ENCODE measurements at regions of chr2 and their contacts with region 1.

Region 1: GRCh38 chr2:86623651-86624541 is at the start of gene RNF103:
- DNase-seq: peak; percentile 91
- H3K4me3 Mint-ChIP-seq: peak within 1 kb of the TSS; percentile 93
- H3K27ac Mint-ChIP-seq: peak within 1 kb of the TSS; percentile 94
- H3K4me1 Mint-ChIP-seq: peaks cover 21% of the 10 kb centered on the region
- H3K27me3 Mint-ChIP-seq: peaks cover 17% of the 10 kb centered on the region
- total RNA-seq, gene RNF103: 12.4 and 12.7 TPM in 2 replicates

Region 2: GRCh38 chr2:86195055-86195807 is 428.7 kb before region 1 on chr2 and contains the start of gene IMMT:
- intact Hi-C with region 1: loop called (anchors 5 kb)
- DNase-seq: peak; percentile 91
- H3K4me3 Mint-ChIP-seq: peak within 1 kb of the TSS; percentile 96
- H3K27ac Mint-ChIP-seq: peak within 1 kb of the TSS; percentile 89
- H3K4me1 Mint-ChIP-seq: peaks cover 43% of the 10 kb centered on the region
- H3K27me3 Mint-ChIP-seq: no peaks in the 10 kb centered on the region
- total RNA-seq, gene IMMT: 160 and 180 TPM in 2 replicates

Region 3: DNA sequence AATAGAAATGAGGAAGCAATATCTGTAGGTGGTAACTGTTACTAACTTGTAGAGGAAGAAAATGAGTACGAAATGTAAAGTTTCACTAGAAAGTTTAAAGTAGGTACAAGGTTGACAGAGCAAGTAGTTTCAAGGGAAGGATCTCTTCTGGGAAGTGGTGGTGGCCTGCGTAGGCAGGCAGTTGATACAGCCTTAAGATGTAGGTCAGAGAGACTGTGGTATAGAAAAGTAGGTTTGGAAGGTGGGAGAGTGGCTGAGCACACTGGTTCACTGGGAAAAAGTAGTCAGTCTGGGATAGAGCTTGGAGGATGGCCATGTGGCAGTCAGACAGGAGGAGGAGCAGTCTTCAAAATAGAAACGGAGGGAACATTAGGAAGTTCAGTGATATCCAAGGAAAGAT is 159.2 kb before region 1 on chr2:
- intact Hi-C with region 1: loop called (anchors 5 kb)
- DNase-seq: no peak
- H3K4me3 Mint-ChIP-seq: peak overlapping the region; percentile 33
- H3K27ac Mint-ChIP-seq: peak overlapping the region; percentile 75
- H3K4me1 Mint-ChIP-seq: peaks cover 52% of the 10 kb centered on the region
- H3K27me3 Mint-ChIP-seq: no peaks in the 10 kb centered on the region

Region 4: DNA sequence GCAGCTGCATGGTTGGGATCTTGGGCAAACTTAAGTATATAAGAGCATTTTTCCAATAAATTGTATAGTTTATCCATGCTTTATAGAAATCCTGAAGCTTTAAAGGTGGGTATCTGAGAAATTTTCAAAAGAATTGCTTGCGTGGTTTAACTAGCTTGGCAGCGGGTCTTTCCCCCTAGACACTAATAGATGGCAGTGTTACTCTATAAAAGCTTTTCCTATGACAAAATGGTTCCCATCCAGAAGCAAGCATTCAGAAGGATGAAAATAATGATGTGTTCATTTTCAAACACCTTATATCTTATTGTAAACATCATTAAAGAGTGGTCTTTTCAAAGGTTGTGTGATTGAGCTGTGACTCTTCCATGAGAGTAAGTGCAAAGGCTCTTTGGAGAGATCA is 136.8 kb before region 1 on chr2:
- intact Hi-C with region 1: loop called (anchors 5 kb)
- DNase-seq: no peak
- H3K4me3 Mint-ChIP-seq: no peak overlapping the region
- H3K27ac Mint-ChIP-seq: no peak overlapping the region
- H3K4me1 Mint-ChIP-seq: peaks cover 29% of the 10 kb centered on the region
- H3K27me3 Mint-ChIP-seq: no peaks in the 10 kb centered on the region

Region 5: GRCh38 chr2:86562922-86563649 is 60.8 kb before region 1 on chr2 and contains the start of gene CHMP3:
- intact Hi-C with region 1: loop called (anchors 2 kb)
- DNase-seq: peak; percentile 96
- H3K4me3 Mint-ChIP-seq: peak within 1 kb of the TSS; percentile 90
- H3K27ac Mint-ChIP-seq: peak within 1 kb of the TSS; percentile 98
- H3K4me1 Mint-ChIP-seq: peaks cover 37% of the 10 kb centered on the region
- H3K27me3 Mint-ChIP-seq: no peaks in the 10 kb centered on the region
- total RNA-seq, gene CHMP3: 31.4 and 33.6 TPM in 2 replicates

Region 6: GRCh38 chr2:86584151-86584913 is 39.6 kb before region 1 on chr2:
- intact Hi-C with region 1: loop called (anchors 1 kb)
- DNase-seq: no peak
- H3K4me3 Mint-ChIP-seq: peak overlapping the region; percentile 23
- H3K27ac Mint-ChIP-seq: peak overlapping the region; percentile 76
- H3K4me1 Mint-ChIP-seq: peaks cover 20% of the 10 kb centered on the region
- H3K27me3 Mint-ChIP-seq: peaks cover 1% of the 10 kb centered on the region

Region 7: DNA sequence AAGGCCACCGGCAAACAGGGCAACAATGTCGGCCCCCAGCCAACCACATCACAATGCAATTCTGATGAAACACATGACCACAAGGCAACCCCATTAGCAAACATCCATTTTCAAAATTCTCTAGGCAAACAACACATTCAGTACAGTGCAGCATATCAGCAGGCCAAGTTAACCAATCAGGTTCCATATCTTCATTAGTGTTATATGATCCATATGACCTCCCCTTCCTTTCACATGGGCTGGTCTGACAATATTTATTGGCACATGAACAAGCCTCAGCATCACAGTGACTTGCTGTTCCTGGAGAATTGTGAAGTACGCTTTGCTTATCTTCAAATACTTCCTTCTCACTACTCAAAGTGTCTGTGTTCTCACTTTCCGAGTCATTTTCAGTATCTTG is 20.0 kb before region 1 on chr2:
- intact Hi-C with region 1: loop called (anchors 2 kb)
- DNase-seq: no peak
- H3K4me3 Mint-ChIP-seq: no peak overlapping the region
- H3K27ac Mint-ChIP-seq: no peak overlapping the region
- H3K4me1 Mint-ChIP-seq: peaks cover 3% of the 10 kb centered on the region
- H3K27me3 Mint-ChIP-seq: no peaks in the 10 kb centered on the region

Measured in activated T-helper 2 cell treated with anti-CD3 and anti-CD28 coated beads, Interferon-gamma antibody, Interleukin-2, Interleukin-4, amounts not matched to agents 10 μg/mL and 5 μg/mL and 100 μg/mL, durations not matched to agents 14 hours and 24 hours and 36 hours (primary cell).